HepG2 (cell line): ENCODE measurements at regions of chr22 and their contacts with region 1.

Region 1: GRCh38 chr22:37457093-37457893 is 28.9 kb downstream of the MFNG start:
- DNase-seq: peak; percentile 60
- ATAC-seq: peak; percentile 90
- H3K4me3 ChIP-seq: no peak overlapping the region
- H3K27ac ChIP-seq: no peak overlapping the region
- H3K4me1 ChIP-seq: peaks cover 23% of the 10 kb centered on the region
- H3K27me3 ChIP-seq: peaks cover 0 to 2% of the 10 kb centered on the region in 2 experiments; a peak in 1 of 5 replicates
- CTCF ChIP-seq: peak; percentile 98
- EP300 ChIP-seq: no peak
- POLR2A ChIP-seq: no peak
- RAD21 ChIP-seq: peak; percentile 94

Region 2: GRCh38 chr22:37267135-37267587 is 190.1 kb before region 1 on chr22:
- CTCF ChIA-PET with region 1: interaction called, 16 read pairs
- POLR2A ChIA-PET with region 1: no interaction called
- in situ Hi-C with region 1: no loop called
- intact Hi-C with region 1: loop called (anchors 5 kb)
- DNase-seq: no peak
- ATAC-seq: peak; percentile 89
- H3K4me3 ChIP-seq: peak overlapping the region in 2 of 3 experiments; percentile 18 to 56; a peak in 3 of 6 replicates
- H3K27ac ChIP-seq: no peak overlapping the region
- H3K4me1 ChIP-seq: 0 out of 2 replicates have a peak, but pooled peaks cover 6% of the 10 kb centered on the region
- H3K27me3 ChIP-seq: peaks cover 1 to 43% of the 10 kb centered on the region in 2 experiments; a peak in 4 of 5 replicates
- CTCF ChIP-seq: peak; percentile 81
- EP300 ChIP-seq: no peak
- POLR2A ChIP-seq: no peak
- RAD21 ChIP-seq: peak; percentile 45; the same call in 1 of the 2 replicates

Region 3: GRCh38 chr22:37316875-37317371 is 140.4 kb before region 1 on chr22:
- CTCF ChIA-PET with region 1: interaction called, 45 read pairs
- POLR2A ChIA-PET with region 1: no interaction called
- in situ Hi-C with region 1: loop called (anchors 5 kb)
- intact Hi-C with region 1: loop called (anchors 1 kb)
- DNase-seq: peak; percentile 83
- ATAC-seq: peak; percentile 89
- H3K4me3 ChIP-seq: no peak overlapping the region
- H3K27ac ChIP-seq: no peak overlapping the region
- H3K4me1 ChIP-seq: peaks cover 18% of the 10 kb centered on the region
- H3K27me3 ChIP-seq: peaks cover 7 to 14% of the 10 kb centered on the region in 2 experiments; a peak in 3 of 5 replicates
- CTCF ChIP-seq: peak; percentile 99
- EP300 ChIP-seq: no peak
- POLR2A ChIP-seq: no peak
- RAD21 ChIP-seq: peak; percentile 96

Region 4: GRCh38 chr22:37328017-37328416 is 129.3 kb before region 1 on chr22:
- CTCF ChIA-PET with region 1: no interaction called
- POLR2A ChIA-PET with region 1: no interaction called
- in situ Hi-C with region 1: loop called (anchors 5 kb)
- intact Hi-C with region 1: no loop called
- DNase-seq: no peak
- ATAC-seq: no peak
- H3K4me3 ChIP-seq: no peak overlapping the region
- H3K27ac ChIP-seq: no peak overlapping the region
- H3K4me1 ChIP-seq: peaks cover 30% of the 10 kb centered on the region
- H3K27me3 ChIP-seq: peaks cover 1 to 3% of the 10 kb centered on the region in 2 experiments; a peak in 2 of 5 replicates
- CTCF ChIP-seq: no peak
- EP300 ChIP-seq: no peak
- POLR2A ChIP-seq: no peak
- RAD21 ChIP-seq: no peak

Region 5: GRCh38 chr22:37403267-37403960 is 53.9 kb before region 1 on chr22:
- CTCF ChIA-PET with region 1: no interaction called
- POLR2A ChIA-PET with region 1: no interaction called
- in situ Hi-C with region 1: no loop called
- intact Hi-C with region 1: no loop called
- DNase-seq: no peak
- ATAC-seq: no peak
- H3K4me3 ChIP-seq: no peak overlapping the region
- H3K27ac ChIP-seq: no peak overlapping the region
- H3K4me1 ChIP-seq: no peaks in the 10 kb centered on the region
- H3K27me3 ChIP-seq: peaks cover 2 to 25% of the 10 kb centered on the region in 2 experiments; a peak in 4 of 5 replicates
- CTCF ChIP-seq: no peak
- EP300 ChIP-seq: no peak
- POLR2A ChIP-seq: no peak
- RAD21 ChIP-seq: no peak